ENCODE measurements at regions of chr17 and their contacts with region 1.

Region 1: GRCh38 chr17:82781894-82782274 is 30.0 kb downstream of the TBCD start:
- DNase-seq: peak; percentile 96
- CTCF ChIP-seq: peak; percentile 97

Region 2: DNA sequence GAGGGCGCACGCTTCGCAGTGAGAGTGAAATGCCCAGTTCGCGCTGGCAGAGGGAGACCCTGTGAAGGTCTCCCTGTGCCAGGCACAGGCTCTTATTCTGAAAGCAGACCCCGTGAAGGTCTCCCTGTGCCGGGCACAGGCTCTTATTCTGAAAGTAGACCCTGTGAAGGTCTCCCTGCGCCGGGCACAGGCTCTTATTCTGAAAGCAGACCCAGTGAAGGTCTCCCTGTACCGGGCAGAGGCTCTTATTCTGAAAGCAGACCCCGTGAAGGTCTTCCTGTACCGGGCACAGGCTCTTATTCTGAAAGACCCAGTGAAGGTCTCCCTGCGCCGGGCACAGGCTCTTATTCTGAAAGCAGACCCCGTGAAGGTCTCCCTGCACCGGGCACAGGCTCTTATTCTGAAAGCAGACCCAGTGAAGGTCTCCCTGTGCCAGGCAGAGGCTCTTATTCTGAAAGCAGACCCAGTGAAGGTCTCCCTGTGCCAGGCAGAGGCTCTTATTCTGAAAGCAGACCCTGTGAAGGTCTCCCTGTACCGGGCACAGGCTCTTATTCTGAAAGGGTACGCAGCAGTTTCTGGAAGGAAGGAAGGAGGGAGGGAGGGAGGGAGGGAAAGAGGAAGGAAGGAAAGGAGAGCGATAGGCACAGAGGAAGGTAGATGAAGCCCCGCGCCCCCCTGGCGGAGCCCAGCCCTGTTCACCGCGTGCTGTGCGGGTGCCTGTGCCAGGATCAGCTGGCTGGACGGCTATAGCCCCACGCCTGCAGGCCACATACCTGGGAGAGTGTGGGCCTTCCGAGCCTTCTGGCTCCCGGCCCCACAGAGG is 188.9 kb before region 1 on chr17:
- in situ Hi-C with region 1: no loop called
- DNase-seq: no peak
- CTCF ChIP-seq: no peak

Region 3: DNA sequence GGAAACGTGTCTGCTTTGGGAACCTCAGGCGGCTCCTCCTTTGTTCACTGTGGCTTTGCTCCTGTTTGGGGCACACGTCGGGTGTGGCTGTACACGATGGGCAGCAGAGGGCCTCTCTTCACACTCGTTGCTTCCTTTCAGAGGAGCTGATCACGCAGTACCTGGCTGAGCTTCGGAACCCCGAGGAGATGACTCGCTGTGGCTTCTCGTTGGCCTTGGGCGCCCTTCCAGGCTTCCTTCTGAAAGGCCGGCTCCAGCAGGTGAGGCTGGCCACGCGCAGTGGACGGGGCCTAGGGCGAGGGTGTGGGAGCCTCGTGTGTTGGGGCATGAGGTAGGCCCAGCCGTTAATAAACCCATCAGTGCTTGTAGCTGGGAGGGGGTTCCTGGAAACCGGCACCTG is 142.9 kb after region 1 on chr17:
- in situ Hi-C with region 1: loop called (anchors 10 kb)
- DNase-seq: no peak
- CTCF ChIP-seq: no peak